ENCODE measurements at regions of chr20 and their contacts with region 1.

Region 1: GRCh38 chr20:815914-816606 is 17.5 kb upstream of the FAM110A start:
- DNase-seq: peak; percentile 80
- ATAC-seq: peak; percentile 72
- H3K4me3 Mint-ChIP-seq: no peak overlapping the region
- H3K27ac Mint-ChIP-seq: no peak overlapping the region
- H3K4me1 Mint-ChIP-seq: no peaks in the 10 kb centered on the region
- H3K27me3 Mint-ChIP-seq: peaks cover 11% of the 10 kb centered on the region

Region 2: DNA sequence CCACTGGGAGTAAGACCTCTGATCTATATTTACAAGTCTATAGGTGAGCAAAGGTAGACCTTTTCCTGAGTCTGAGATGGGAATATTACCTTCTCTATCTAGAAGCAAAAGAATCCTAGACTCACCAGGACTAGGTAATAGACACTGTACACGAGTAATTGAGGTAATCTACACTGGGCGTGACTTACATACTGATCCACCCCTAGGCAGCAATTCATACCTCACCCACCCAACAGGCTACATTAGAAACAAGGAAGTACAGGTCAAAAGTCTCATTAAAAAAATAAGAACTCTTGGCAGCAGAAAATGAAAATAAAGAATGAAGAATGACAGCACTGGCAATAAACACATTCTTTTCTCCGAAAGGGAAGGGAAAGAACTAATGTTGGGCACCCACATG is 280.1 kb before region 1 on chr20:
- CTCF ChIA-PET with region 1: no interaction called
- POLR2A ChIA-PET with region 1: no interaction called
- intact Hi-C with region 1: no loop called
- DNase-seq: no peak
- ATAC-seq: no peak
- H3K4me3 Mint-ChIP-seq: no peak overlapping the region
- H3K27ac Mint-ChIP-seq: no peak overlapping the region
- H3K4me1 Mint-ChIP-seq: peaks cover 83% of the 10 kb centered on the region
- H3K27me3 Mint-ChIP-seq: no peaks in the 10 kb centered on the region

Region 3: GRCh38 chr20:768426-768978 is 47.6 kb before region 1 on chr20 and contains the start of gene SLC52A3:
- CTCF ChIA-PET with region 1: interaction called, 3 read pairs
- POLR2A ChIA-PET with region 1: interaction called, 13 read pairs
- intact Hi-C with region 1: no loop called
- DNase-seq: peak; percentile 25
- ATAC-seq: no peak
- H3K4me3 Mint-ChIP-seq: no peak within 1 kb of the TSS
- H3K27ac Mint-ChIP-seq: no peak within 1 kb of the TSS
- H3K4me1 Mint-ChIP-seq: no peaks in the 10 kb centered on the region
- H3K27me3 Mint-ChIP-seq: peaks cover 6% of the 10 kb centered on the region
- total RNA-seq, gene SLC52A3: not detected

Region 4: DNA sequence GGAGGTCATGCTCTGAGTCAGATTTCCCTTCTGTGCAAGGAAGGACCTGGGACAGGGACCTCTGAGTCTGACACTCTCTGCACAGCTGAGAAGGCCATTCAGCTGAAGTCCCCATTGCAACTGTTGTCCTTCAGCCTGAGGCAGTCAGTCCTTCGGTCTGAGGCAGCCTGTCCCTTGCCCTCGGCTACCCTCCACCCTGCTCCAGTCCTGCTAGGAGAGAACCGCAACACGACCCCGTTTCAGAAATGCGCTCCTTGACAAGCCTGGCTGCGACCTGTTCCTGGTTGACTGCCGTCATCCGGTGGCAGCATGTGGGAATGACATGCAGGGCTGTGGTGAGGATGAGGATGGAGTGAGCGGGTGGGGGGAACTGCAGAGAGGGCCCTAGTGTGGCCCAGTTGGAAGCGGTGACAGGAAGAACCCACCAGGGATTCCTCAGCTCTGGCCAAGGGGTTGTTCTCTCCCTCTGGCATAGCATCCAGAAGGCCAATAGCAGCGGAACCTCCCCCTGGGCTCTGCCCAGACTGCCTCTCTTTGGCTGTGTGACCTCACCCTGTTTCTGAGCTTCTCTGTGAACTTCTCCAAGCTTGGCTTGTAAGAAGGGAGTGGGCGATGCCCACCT is 140.4 kb after region 1 on chr20:
- CTCF ChIA-PET with region 1: interaction called, 164 read pairs
- POLR2A ChIA-PET with region 1: no interaction called
- intact Hi-C with region 1: loop called (anchors 1 kb)
- DNase-seq: peak; percentile 84
- ATAC-seq: peak; percentile 89
- H3K4me3 Mint-ChIP-seq: no peak overlapping the region
- H3K27ac Mint-ChIP-seq: no peak overlapping the region
- H3K4me1 Mint-ChIP-seq: no peaks in the 10 kb centered on the region
- H3K27me3 Mint-ChIP-seq: peaks cover 20% of the 10 kb centered on the region

Region 5: GRCh38 chr20:1108437-1108920 is 292.4 kb after region 1 on chr20:
- CTCF ChIA-PET with region 1: interaction called, 4 read pairs
- POLR2A ChIA-PET with region 1: no interaction called
- intact Hi-C with region 1: loop called (anchors 1 to 10 kb)
- DNase-seq: peak; percentile 76
- ATAC-seq: peak; percentile 81
- H3K4me3 Mint-ChIP-seq: no peak overlapping the region
- H3K27ac Mint-ChIP-seq: no peak overlapping the region
- H3K4me1 Mint-ChIP-seq: no peaks in the 10 kb centered on the region
- H3K27me3 Mint-ChIP-seq: no peaks in the 10 kb centered on the region

Region 6: GRCh38 chr20:1212607-1213396 is 396.7 kb after region 1 on chr20:
- CTCF ChIA-PET with region 1: interaction called, 8 read pairs
- POLR2A ChIA-PET with region 1: no interaction called
- intact Hi-C with region 1: loop called (anchors 1 to 5 kb)
- DNase-seq: peak; percentile 86
- ATAC-seq: peak; percentile 66
- H3K4me3 Mint-ChIP-seq: no peak overlapping the region
- H3K27ac Mint-ChIP-seq: no peak overlapping the region
- H3K4me1 Mint-ChIP-seq: peaks cover 36% of the 10 kb centered on the region
- H3K27me3 Mint-ChIP-seq: peaks cover 3% of the 10 kb centered on the region